Endothelial cell of umbilical vein (primary cell): ENCODE measurements at regions of chr3 and their contacts with region 1.

Region 1: DNA sequence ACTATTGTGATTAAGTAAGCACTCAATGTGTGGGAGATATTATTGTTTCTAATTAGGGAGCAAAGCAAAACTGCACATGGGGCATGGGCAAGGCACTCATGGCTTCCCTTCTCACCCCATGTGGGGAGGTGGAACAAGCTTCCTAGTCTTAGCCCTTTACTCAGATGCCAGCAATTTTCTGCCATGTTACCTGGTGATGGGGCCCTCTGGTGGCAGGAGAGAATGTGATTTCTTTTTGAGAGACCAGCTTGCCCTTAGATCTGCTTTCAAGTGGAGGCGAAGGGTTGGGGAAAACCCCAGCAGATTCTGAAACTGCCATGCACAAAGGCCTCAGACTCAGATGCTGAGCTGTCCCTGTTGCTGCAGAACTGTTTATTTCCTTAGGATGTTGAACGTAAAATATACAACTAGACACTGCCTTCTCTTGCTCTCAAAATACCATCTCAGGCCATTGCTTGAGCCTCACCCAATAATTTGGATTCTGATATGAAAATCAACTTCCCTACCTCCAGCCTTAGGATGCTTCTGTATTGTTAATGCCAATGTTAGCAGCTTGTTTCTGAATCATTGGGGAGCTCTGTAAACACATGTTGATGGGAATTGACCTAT is 130.2 kb upstream of the TPRG1 start:
- DNase-seq: peak; percentile 67
- H3K4me3 ChIP-seq: no peak overlapping the region
- H3K27ac ChIP-seq: no peak overlapping the region
- H3K4me1 ChIP-seq: no peaks in the 10 kb centered on the region
- H3K27me3 ChIP-seq: peaks cover 0 to 3% of the 10 kb centered on the region in 2 experiments
- CTCF ChIP-seq: peak; percentile 45 to 56
- POLR2A ChIP-seq: no peak

Region 2: GRCh38 chr3:188974856-188975599 is 66.6 kb before region 1 on chr3:
- CTCF ChIA-PET with region 1: interaction called, 5 read pairs
- POLR2A ChIA-PET with region 1: no interaction called
- dilution Hi-C with region 1: no loop called
- intact Hi-C with region 1: loop called (anchors 5 kb)
- DNase-seq: no peak
- H3K4me3 ChIP-seq: no peak overlapping the region
- H3K27ac ChIP-seq: no peak overlapping the region
- H3K4me1 ChIP-seq: no peaks in the 10 kb centered on the region
- H3K27me3 ChIP-seq: peaks cover 10 to 20% of the 10 kb centered on the region in 2 experiments
- CTCF ChIP-seq: no peak
- POLR2A ChIP-seq: no peak

Region 3: GRCh38 chr3:188993181-188993580 is 48.4 kb before region 1 on chr3:
- CTCF ChIA-PET with region 1: interaction called, 12 read pairs
- POLR2A ChIA-PET with region 1: no interaction called
- dilution Hi-C with region 1: no loop called
- intact Hi-C with region 1: no loop called
- DNase-seq: no peak
- H3K4me3 ChIP-seq: no peak overlapping the region
- H3K27ac ChIP-seq: no peak overlapping the region
- H3K4me1 ChIP-seq: no peaks in the 10 kb centered on the region
- H3K27me3 ChIP-seq: peaks cover 0 to 6% of the 10 kb centered on the region in 2 experiments
- CTCF ChIP-seq: no peak
- POLR2A ChIP-seq: no peak

Region 4: DNA sequence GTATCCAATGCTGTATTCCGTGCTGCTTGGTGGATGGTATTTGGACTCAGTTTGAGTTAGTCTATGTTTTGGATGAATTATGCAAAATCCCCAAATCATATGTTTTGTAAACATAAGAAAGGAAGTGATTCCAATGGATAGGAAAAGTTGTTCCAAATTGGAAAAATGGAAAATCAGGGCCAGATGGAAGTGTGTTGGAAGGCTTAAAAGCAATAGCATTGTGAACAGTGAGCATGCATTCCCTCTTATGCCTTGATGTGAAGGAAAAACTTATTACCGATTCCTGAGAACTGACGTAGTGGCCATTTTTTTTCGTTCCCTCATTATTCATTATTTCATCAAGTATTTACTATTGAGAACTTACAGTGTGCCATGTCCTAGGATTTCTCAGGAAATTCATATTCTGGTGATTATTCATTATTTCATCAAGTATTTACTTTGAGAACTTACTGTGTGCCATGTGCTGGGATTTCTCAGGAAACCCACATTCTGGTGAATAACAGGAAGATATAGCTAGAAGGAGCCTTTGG is 13.9 kb before region 1 on chr3:
- CTCF ChIA-PET with region 1: interaction called, 13 read pairs
- POLR2A ChIA-PET with region 1: no interaction called
- dilution Hi-C with region 1: no loop called
- intact Hi-C with region 1: no loop called
- DNase-seq: no peak
- H3K4me3 ChIP-seq: no peak overlapping the region
- H3K27ac ChIP-seq: no peak overlapping the region
- H3K4me1 ChIP-seq: no peaks in the 10 kb centered on the region
- H3K27me3 ChIP-seq: peaks cover 0 to 2% of the 10 kb centered on the region in 2 experiments
- CTCF ChIP-seq: no peak
- POLR2A ChIP-seq: no peak

Region 5: GRCh38 chr3:189148081-189148507 is 106.5 kb after region 1 on chr3:
- CTCF ChIA-PET with region 1: interaction called, 8 read pairs
- POLR2A ChIA-PET with region 1: no interaction called
- dilution Hi-C with region 1: no loop called
- intact Hi-C with region 1: loop called (anchors 1 kb)
- DNase-seq: peak; percentile 71
- H3K4me3 ChIP-seq: no peak overlapping the region
- H3K27ac ChIP-seq: no peak overlapping the region
- H3K4me1 ChIP-seq: no peaks in the 10 kb centered on the region
- H3K27me3 ChIP-seq: peaks cover 5 to 8% of the 10 kb centered on the region in 2 experiments
- CTCF ChIP-seq: peak; percentile 61 to 70
- POLR2A ChIP-seq: no peak